ENCODE measurements at regions of chr6 and their contacts with region 1.

Region 1: GRCh38 chr6:160520043-160520904 is 143.8 kb downstream of the LPA start:
- DNase-seq: peak; percentile 86
- H3K4me3 Mint-ChIP-seq: peak overlapping the region; percentile 75
- H3K27ac Mint-ChIP-seq: no peak overlapping the region
- H3K4me1 Mint-ChIP-seq: no peaks in the 10 kb centered on the region
- H3K27me3 Mint-ChIP-seq: peaks cover 17% of the 10 kb centered on the region
- CTCF ChIP-seq: peak; percentile 85

Region 2: DNA sequence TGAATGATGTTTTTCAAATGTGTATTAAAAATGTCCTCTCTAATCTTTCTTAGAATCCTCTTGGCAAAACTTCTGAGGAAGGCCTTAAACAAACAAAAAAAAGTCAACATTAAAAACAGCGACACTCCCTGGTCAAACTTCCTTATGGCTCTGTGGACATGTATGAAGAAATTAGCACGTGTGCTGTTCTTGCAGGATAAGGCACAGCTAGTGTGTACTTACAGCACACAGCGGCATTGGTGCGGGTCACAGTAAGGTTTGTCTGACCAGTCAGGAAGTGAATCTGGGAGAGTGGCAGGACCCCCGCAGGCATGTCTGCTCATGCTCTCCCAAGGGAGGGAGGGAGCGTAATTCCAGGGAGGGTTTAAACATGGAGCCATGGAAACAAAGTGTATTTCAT is 359.8 kb before region 1 on chr6:
- CTCF ChIA-PET with region 1: no interaction called
- intact Hi-C with region 1: no loop called
- DNase-seq: no peak
- H3K4me3 Mint-ChIP-seq: no peak overlapping the region
- H3K27ac Mint-ChIP-seq: no peak overlapping the region
- H3K4me1 Mint-ChIP-seq: no peaks in the 10 kb centered on the region
- H3K27me3 Mint-ChIP-seq: no peaks in the 10 kb centered on the region
- CTCF ChIP-seq: no peak

Region 3: DNA sequence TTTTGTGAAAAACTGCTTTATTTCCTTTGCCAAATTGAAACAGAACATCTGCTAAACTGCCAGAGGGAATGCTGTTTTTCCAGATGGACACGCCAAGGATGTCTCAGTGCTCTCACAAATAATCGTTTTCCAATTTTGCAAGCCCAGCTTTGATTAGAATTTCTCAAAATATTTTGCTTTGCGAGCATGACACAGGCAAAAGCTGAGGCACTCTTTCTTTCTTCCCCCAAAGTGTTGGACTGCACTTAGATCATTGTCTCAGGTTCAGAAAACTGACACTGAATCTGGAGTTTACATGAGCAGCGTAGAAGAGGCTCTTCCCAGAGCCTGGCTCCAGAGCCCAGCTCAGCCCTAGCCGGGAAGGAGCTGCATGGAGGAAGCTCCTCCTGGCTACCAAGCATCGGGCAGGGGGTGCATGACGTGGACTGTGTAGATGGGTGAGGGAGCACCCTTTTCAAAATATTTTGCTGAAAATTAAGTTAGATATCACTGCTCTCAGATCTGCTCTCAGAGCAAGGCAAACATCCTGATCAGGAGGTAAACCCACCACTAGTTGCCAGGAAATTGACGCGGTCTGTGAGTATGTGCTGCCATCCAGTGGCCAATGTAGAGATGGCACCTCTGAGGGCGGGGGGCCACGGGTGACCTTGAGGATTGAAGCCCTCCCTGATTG is 64.6 kb before region 1 on chr6:
- CTCF ChIA-PET with region 1: no interaction called
- intact Hi-C with region 1: no loop called
- DNase-seq: peak; percentile 70
- H3K4me3 Mint-ChIP-seq: no peak overlapping the region
- H3K27ac Mint-ChIP-seq: no peak overlapping the region
- H3K4me1 Mint-ChIP-seq: no peaks in the 10 kb centered on the region
- H3K27me3 Mint-ChIP-seq: no peaks in the 10 kb centered on the region
- CTCF ChIP-seq: peak; percentile 98

Region 4: DNA sequence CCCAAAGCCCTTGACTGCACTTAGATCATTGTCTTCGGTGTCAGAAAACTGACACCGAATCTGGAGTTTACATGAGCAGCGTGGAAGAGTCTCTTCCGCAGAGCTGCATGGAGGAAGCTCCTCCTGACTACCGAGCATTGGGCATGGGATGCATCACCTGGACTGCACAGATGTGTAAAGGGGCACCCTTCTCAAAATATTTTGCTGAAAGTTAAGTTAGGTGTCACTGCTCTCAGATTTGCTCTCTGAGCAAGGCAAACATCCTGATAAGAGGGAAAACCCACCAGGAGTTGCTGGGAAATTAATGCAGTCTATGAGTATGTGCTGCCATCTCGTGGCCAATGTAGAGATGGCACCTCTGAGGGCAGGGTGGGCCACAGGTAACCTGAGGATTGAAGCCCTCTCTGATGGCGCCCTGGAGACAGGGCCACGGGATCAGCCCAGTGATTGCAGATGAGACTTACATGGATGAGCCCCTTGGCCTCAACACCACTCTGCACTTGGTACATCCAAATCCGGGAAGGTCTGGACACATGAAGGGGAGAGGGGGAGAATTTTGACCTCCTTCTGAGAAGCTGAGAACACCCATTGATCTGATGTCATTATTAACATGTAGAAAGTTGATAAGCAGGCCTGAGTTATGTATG is 13.9 kb after region 1 on chr6:
- CTCF ChIA-PET with region 1: interaction called, 17 read pairs
- intact Hi-C with region 1: loop called (anchors 2 kb)
- DNase-seq: peak; percentile 64
- H3K4me3 Mint-ChIP-seq: no peak overlapping the region
- H3K27ac Mint-ChIP-seq: no peak overlapping the region
- H3K4me1 Mint-ChIP-seq: no peaks in the 10 kb centered on the region
- H3K27me3 Mint-ChIP-seq: no peaks in the 10 kb centered on the region
- CTCF ChIP-seq: peak; percentile 94

Region 5: GRCh38 chr6:160595838-160596832 is 75.9 kb after region 1 on chr6:
- CTCF ChIA-PET with region 1: no interaction called
- intact Hi-C with region 1: no loop called
- DNase-seq: no peak
- H3K4me3 Mint-ChIP-seq: no peak overlapping the region
- H3K27ac Mint-ChIP-seq: no peak overlapping the region
- H3K4me1 Mint-ChIP-seq: no peaks in the 10 kb centered on the region
- H3K27me3 Mint-ChIP-seq: peaks cover 62% of the 10 kb centered on the region
- CTCF ChIP-seq: no peak

Region 6: DNA sequence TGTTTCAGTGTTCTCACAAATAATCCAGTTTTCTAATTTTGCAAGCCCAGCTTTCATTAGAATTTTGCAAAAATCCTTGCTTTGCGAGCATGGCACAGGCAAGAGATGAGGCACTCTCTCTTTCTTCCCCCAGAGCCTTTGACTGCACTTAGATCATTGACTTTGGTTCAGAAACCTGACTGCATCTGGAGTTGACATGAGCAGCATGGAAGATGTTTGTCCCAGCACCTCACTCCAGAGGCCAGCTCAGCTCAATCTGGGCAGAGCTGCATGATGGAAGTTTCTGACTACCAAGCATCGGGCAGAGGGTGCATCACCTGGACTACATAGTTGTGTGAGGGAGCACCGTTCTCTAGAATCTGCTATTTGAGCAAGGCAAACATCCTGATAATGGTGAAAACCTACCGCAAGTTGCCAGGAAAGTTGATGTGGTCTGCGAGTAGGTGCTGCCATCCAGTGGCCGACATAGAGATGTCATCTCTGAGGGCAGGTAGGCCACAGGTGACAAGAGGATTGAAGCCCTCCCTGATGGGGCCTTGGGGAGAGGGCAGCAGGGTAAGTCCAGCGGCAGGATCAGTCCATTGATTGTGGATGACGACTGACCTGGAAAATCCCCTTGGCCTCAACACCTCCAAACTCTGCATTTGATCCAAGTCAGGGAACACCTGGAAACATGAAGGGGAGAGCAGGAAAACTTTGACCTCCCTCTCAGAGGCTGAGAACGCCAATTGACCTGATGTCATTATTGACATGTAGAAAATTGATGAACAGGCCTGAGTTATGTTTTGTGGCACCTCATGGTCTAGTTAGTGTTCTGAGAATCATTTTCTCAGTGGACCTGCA is 147.6 kb after region 1 on chr6:
- CTCF ChIA-PET with region 1: no interaction called
- intact Hi-C with region 1: loop called (anchors 1 kb)
- DNase-seq: peak; percentile 64
- H3K4me3 Mint-ChIP-seq: no peak overlapping the region
- H3K27ac Mint-ChIP-seq: no peak overlapping the region
- H3K4me1 Mint-ChIP-seq: no peaks in the 10 kb centered on the region
- H3K27me3 Mint-ChIP-seq: peaks cover 10% of the 10 kb centered on the region
- CTCF ChIP-seq: peak; percentile 41